GM12878 (cell line): ENCODE measurements at regions of chr17 and their contacts with region 1.

Region 1: DNA sequence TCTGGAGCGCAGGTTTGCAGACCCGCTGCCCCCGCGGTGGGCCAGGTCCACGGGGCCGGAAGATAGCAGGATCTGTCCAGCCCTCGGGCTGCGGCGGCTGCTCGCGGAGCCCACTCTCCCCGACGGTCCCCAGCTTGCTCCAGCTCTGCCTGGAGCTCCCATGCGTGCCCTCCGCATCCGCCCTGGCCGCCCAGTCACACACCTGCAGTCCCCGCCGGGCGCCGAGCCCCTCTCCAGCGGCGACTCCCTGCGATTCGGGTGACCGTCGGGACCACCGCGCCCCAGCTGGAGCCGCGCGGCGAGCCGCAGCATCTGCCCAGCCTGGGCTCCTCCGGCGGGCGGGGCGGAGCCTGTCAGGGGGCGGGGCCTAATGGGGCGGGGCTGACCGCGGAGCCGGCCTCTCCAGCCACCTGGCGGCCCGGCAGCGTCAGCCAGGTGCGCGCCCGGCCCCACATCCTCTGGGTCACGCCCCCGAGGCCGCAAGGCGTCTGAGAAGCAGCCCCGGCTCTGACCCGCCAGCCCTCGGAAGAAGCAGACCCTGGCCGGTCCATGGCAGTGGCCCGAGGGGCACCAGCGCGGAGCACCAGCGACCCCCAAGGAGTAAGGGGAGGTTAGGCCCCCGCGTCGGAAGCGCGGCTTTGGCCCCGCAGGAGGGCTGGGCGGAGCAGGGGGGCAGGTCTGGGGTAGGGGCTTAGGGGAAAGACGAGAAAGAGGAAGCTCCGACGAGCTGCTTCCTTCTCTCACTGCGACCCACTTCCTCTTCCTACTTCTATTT is at the start of gene PIK3R5:
- DNase-seq: no peak
- ATAC-seq: peak; percentile 79
- H3K4me3 ChIP-seq: peak within 1 kb of the TSS; percentile 90
- H3K27ac ChIP-seq: peak within 1 kb of the TSS; percentile 80
- H3K4me1 ChIP-seq: peaks cover 28% of the 10 kb centered on the region
- H3K27me3 ChIP-seq: no peaks in the 10 kb centered on the region
- CTCF ChIP-seq: peak in 1 of 3 experiments; percentile 27; a peak in 2 of 6 replicates
- EP300 ChIP-seq: no peak
- POLR2A ChIP-seq: peak; percentile 87
- RAD21 ChIP-seq: no peak
- polyA plus RNA-seq, gene PIK3R5: 9.5 to 9.6 TPM

Region 2: DNA sequence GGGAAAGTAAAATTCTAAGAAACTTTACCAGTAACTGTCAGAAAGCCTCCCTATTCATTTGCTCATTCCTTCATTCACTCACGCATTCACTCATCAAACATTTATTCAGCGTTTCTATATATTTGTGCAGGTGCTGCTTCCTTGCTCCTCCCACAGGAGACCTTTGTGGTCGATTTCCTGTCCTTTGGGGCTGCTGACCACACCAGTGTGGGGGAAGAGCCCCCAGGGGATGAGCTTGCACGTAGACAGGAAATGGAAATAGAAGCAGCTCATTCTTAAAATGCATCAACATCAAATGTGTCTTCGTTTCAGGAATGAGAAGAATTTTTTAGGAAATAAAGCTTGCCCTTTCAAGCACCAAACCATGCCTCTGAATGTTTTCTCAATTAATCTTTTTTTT is 107.7 kb before region 1 on chr17:
- CTCF ChIA-PET with region 1: interaction called, 5 read pairs
- POLR2A ChIA-PET with region 1: interaction called, 8 read pairs
- RAD21 ChIA-PET with region 1: interaction called, 21 read pairs
- SMC1A ChIA-PET with region 1: interaction called, 5 read pairs
- in situ Hi-C with region 1: no loop called
- intact Hi-C with region 1: no loop called
- DNase-seq: peak; percentile 95
- ATAC-seq: peak; percentile 40
- H3K4me3 ChIP-seq: peak overlapping the region; percentile 57; the same call in 1 of the 2 replicates
- H3K27ac ChIP-seq: peak overlapping the region; percentile 99
- H3K4me1 ChIP-seq: peaks cover 60% of the 10 kb centered on the region
- H3K27me3 ChIP-seq: no peaks in the 10 kb centered on the region
- CTCF ChIP-seq: no peak
- EP300 ChIP-seq: peak; percentile 98 to 99
- POLR2A ChIP-seq: no peak
- RAD21 ChIP-seq: peak; percentile 12; the same call in 1 of the 2 replicates

Region 3: DNA sequence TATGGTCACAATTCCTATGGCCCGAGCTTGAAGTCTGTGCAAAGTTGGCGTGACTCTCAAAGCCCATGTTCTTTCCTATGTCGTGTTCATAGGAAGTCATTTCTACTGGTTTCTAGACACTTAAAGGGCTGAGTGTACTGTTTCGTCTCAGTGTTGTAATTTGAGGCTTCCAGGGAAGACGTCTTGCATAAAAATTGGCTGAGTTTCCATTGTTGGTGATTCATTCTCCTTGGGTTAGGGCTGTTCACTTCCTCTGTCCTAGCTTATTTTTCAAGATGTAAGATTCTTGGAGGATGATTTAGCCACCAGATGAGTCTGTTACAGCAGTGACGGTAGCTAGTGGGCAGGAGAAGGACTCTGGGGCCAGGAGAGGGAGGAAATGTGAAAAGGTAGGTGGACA is 43.1 kb before region 1 on chr17:
- CTCF ChIA-PET with region 1: no interaction called
- POLR2A ChIA-PET with region 1: interaction called, 11 read pairs
- RAD21 ChIA-PET with region 1: interaction called, 11 read pairs
- SMC1A ChIA-PET with region 1: interaction called, 7 read pairs
- in situ Hi-C with region 1: no loop called
- intact Hi-C with region 1: no loop called
- DNase-seq: no peak
- ATAC-seq: no peak
- H3K4me3 ChIP-seq: no peak overlapping the region
- H3K27ac ChIP-seq: no peak overlapping the region
- H3K4me1 ChIP-seq: peaks cover 50% of the 10 kb centered on the region
- H3K27me3 ChIP-seq: no peaks in the 10 kb centered on the region
- CTCF ChIP-seq: no peak
- EP300 ChIP-seq: no peak
- POLR2A ChIP-seq: no peak
- RAD21 ChIP-seq: no peak

Region 4: DNA sequence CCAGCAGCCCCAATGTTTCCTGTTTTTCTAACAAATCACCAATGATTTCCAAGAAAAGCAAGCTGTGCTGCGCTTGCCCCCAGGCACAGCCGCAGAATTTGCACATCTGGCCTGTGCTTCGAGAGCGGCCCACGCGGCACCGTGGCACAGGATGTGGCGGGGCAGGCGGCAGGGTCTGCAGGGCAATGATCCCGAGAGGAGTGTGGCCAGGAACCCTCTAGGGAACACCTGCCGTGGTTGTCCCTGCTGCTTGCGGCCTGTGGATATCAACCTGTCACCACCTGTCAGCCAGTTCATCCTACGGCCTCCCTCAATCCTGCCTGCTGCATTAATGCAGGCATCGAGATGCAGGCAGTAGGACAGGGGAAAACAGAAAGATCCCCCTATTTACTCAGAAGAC is 24.1 kb before region 1 on chr17:
- CTCF ChIA-PET with region 1: interaction called, 5 read pairs
- POLR2A ChIA-PET with region 1: interaction called, 35 read pairs
- RAD21 ChIA-PET with region 1: interaction called, 69 read pairs
- SMC1A ChIA-PET with region 1: interaction called, 345 read pairs
- in situ Hi-C with region 1: no loop called
- intact Hi-C with region 1: no loop called
- DNase-seq: no peak
- ATAC-seq: peak; percentile 68
- H3K4me3 ChIP-seq: peak overlapping the region; percentile 15; the same call in 1 of the 2 replicates
- H3K27ac ChIP-seq: peak overlapping the region; percentile 94
- H3K4me1 ChIP-seq: peaks cover 45% of the 10 kb centered on the region
- H3K27me3 ChIP-seq: no peaks in the 10 kb centered on the region
- CTCF ChIP-seq: no peak
- EP300 ChIP-seq: peak; percentile 61 to 82
- POLR2A ChIP-seq: 0 out of 2 replicates have a peak, but pooled peaks have one; percentile 13
- RAD21 ChIP-seq: no peak

Region 5: DNA sequence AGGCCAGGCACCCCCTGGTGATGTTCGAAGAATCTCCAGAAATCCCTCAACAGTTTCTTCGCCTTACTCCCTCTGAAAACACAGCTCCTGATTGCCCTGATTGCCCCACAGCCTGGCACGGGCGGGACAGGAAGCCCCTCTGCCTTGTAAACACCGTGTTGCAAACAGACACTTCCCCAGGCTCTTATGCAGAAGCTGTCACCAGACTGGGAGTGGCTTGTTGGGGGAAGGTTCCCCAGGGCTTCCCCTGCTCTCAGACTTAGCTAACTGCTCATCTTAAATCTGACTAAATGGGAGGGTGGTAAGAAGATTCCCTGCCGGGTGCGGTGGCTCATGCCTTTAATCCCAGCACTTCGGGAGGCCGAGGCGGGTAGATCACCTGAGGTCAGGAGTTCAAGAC is 11.2 kb before region 1 on chr17:
- CTCF ChIA-PET with region 1: interaction called, 10 read pairs
- POLR2A ChIA-PET with region 1: interaction called, 56 read pairs
- RAD21 ChIA-PET with region 1: interaction called, 28 read pairs
- SMC1A ChIA-PET with region 1: interaction called, 345 read pairs
- in situ Hi-C with region 1: no loop called
- intact Hi-C with region 1: no loop called
- DNase-seq: no peak
- ATAC-seq: peak; percentile 72
- H3K4me3 ChIP-seq: no peak overlapping the region
- H3K27ac ChIP-seq: peak overlapping the region; percentile 81
- H3K4me1 ChIP-seq: peaks cover 85% of the 10 kb centered on the region
- H3K27me3 ChIP-seq: no peaks in the 10 kb centered on the region
- CTCF ChIP-seq: no peak
- EP300 ChIP-seq: peak; percentile 9 to 27; a peak in 1 of 4 replicates
- POLR2A ChIP-seq: peak; percentile 31; the same call in 1 of the 2 replicates
- RAD21 ChIP-seq: no peak

Region 6: DNA sequence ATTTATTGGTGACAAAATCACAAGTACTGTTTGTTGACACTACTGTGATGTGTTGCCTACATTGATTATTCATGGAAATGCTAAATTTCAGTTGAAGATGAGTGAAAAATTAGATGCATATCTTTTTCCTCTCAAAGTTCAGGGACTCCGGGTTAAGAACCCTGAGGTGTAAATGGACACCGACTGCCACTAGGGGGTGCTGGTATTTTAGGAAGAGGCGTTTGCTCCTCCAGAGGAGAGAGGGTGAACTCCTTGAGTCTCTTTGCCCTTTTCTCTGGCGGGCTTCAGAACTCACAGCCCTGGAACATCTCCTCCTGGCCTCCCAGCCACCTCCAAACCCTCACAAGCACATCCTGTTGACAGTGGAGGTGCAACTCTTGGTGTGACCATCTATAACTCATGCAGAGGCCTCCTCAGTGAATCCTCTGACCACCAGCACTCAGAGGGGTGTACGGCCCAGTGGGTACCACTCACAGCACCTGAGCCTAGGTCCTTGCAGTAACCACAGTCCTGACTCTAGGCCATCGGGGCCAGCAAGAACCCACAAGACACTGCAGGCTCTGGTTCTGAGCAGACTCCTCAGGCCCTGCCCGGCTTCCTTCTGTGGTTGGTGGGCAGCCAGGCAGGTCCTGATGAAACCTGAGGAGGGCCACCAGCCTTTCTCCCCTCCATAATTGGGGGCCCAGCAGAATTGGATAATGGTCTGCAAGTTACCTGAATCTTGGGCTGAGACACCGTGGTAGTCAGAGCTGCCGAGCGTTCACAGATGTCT is 26.1 kb after region 1 on chr17:
- CTCF ChIA-PET with region 1: interaction called, 44 read pairs
- POLR2A ChIA-PET with region 1: interaction called, 3 read pairs
- RAD21 ChIA-PET with region 1: interaction called, 14 read pairs
- SMC1A ChIA-PET with region 1: interaction called, 8 read pairs
- in situ Hi-C with region 1: no loop called
- intact Hi-C with region 1: no loop called
- DNase-seq: no peak
- ATAC-seq: peak; percentile 74
- H3K4me3 ChIP-seq: no peak overlapping the region
- H3K27ac ChIP-seq: no peak overlapping the region
- H3K4me1 ChIP-seq: peaks cover 12% of the 10 kb centered on the region
- H3K27me3 ChIP-seq: no peaks in the 10 kb centered on the region
- CTCF ChIP-seq: peak; percentile 38 to 77 (median 71)
- EP300 ChIP-seq: no peak
- POLR2A ChIP-seq: no peak
- RAD21 ChIP-seq: peak; percentile 57